B cell (primary cell): ENCODE measurements at regions of chr1 and their contacts with region 1.

Region 1: DNA sequence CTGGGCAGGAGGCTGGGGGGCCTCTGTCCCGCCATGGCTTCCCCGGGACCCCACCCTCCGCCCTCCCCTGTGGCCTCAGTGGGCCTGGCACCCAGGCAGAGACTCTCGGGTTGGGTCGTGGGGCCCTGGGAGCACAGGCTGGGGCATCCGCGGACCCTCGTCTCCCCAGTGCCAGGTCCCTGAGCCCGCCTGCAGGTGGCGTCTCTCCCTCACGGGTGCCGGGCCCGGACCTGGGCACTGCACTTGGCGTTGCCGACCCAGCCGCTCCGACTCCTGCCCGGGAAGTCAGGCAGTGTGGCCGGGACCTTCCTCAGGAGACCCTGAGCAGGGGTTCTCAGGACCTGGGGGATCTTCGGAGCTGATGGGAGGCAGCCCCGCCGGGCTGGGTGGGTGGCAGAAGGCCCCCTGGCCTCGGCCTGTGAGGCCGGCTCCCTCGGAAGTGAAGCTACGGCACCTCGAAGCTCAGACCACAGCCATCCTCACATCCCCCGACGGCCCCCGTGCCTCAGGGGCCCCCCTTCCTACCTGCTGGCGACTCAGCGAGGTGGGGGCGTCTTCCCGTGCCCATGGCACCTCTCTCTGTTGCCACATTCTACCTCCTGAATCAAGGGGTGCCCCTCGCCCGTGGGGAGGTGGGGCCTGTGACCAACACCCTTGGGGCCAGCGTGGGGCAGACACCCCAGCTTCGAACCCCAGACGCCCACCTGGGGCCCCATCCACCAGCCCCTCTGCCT is 6.4 kb upstream of the C1orf159 start:
- DNase-seq: peak; percentile 90
- ATAC-seq: peak; percentile 97
- H3K4me3 ChIP-seq: peak overlapping the region in 4 of 5 experiments; percentile 28 to 52 (median 44)
- H3K4me3 Mint-ChIP-seq: peak overlapping the region; percentile 47
- H3K27ac ChIP-seq: peak overlapping the region; percentile 29 to 37
- H3K27ac Mint-ChIP-seq: no peak overlapping the region
- H3K4me1 ChIP-seq: peaks cover 29 to 31% of the 10 kb centered on the region in 2 donors
- H3K4me1 Mint-ChIP-seq: peaks cover 19% of the 10 kb centered on the region
- H3K27me3 ChIP-seq: peaks cover 0 to 30% (median 3%) of the 10 kb centered on the region in 4 experiments
- H3K27me3 Mint-ChIP-seq: peaks cover 9% of the 10 kb centered on the region
- CTCF ChIP-seq: peak; percentile 96

Region 2: DNA sequence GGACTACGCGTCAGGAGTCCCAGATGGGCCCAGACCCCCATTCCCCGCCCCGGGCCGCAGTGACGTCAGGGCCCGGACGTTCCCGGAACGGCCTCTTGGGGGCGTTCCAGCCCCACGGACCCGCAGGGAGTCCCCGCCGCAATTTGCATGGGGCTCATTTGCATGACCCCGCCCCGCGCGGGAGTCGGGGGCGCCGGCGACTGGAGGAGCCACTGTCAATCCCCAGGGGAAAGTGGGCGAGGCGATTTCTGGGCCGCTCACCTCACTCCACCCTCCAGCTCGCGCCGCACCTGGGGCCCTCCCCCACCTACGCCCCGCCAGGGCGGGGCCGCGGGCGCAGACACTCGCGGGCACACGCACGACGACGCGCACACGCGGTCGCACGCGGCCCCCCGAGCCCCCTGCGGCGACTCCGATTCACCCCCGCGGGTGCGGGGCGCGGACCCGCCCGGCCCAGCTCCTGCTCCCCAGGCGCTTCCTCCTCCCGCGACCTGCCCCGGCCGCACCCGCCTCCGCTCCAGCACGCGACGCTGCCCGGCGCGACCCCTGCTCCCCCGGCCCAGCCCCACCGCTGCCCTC is 89.1 kb before region 1 on chr1:
- CTCF ChIA-PET with region 1: interaction called, 14 read pairs
- POLR2A ChIA-PET with region 1: no interaction called
- intact Hi-C with region 1: loop called (anchors 2 kb)
- DNase-seq: peak; percentile 98
- ATAC-seq: peak; percentile 93
- H3K4me3 ChIP-seq: peak overlapping the region in 4 of 5 experiments; percentile 20 to 50 (median 38)
- H3K4me3 Mint-ChIP-seq: peak overlapping the region; percentile 78
- H3K27ac ChIP-seq: no peak overlapping the region
- H3K27ac Mint-ChIP-seq: peak overlapping the region; percentile 56
- H3K4me1 ChIP-seq: peaks cover 29 to 30% of the 10 kb centered on the region in 2 donors
- H3K4me1 Mint-ChIP-seq: peaks cover 24% of the 10 kb centered on the region
- H3K27me3 ChIP-seq: peaks cover 0 to 32% (median 5%) of the 10 kb centered on the region in 4 experiments
- H3K27me3 Mint-ChIP-seq: peaks cover 11% of the 10 kb centered on the region
- CTCF ChIP-seq: peak; percentile 89

Region 3: DNA sequence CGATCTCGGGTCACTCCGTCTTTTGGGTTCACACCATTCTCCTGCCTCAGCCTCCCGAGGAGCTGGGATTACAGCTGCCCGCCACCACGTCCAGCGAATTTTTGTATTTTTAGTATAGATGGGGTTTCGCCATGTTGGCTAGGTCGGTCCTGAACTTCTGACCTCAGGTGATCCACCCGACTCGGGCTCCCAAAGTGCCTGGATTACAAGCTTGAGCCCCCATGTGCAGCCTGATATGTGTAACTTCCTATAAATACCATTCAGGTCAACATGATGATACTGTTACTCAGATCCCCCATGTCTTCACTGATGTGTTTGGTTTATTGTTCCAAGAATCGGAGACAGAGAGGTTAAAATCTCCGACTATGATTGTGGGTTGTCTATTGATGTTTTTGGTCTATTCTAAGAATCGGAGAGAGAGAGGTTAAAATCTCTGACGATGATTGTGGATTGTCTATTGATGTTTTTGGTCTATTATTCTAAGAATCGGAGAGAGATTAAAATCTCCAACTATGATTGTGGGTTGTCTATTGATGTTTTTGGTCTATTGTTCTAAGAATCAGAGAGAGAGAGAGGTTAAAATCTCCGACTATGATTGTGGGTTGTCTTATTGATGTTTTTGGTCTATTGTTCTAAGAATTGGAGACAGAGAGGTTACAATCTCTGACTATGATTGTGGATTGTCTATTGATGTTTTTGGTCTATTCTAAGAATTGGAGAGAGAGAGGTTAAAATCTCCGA is 23.4 kb before region 1 on chr1:
- CTCF ChIA-PET with region 1: no interaction called
- POLR2A ChIA-PET with region 1: no interaction called
- intact Hi-C with region 1: no loop called
- DNase-seq: no peak
- ATAC-seq: no peak
- H3K4me3 ChIP-seq: no peak overlapping the region
- H3K4me3 Mint-ChIP-seq: no peak overlapping the region
- H3K27ac ChIP-seq: no peak overlapping the region
- H3K27ac Mint-ChIP-seq: no peak overlapping the region
- H3K4me1 ChIP-seq: no peaks in the 10 kb centered on the region
- H3K4me1 Mint-ChIP-seq: no peaks in the 10 kb centered on the region
- H3K27me3 ChIP-seq: no peaks in the 10 kb centered on the region
- H3K27me3 Mint-ChIP-seq: no peaks in the 10 kb centered on the region
- CTCF ChIP-seq: no peak

Region 4: GRCh38 chr1:1157426-1157913 is 35.2 kb after region 1 on chr1:
- CTCF ChIA-PET with region 1: interaction called, 14 read pairs
- POLR2A ChIA-PET with region 1: interaction called, 7 read pairs
- intact Hi-C with region 1: no loop called
- DNase-seq: peak; percentile 74
- ATAC-seq: peak; percentile 64
- H3K4me3 ChIP-seq: peak overlapping the region; percentile 52 to 93 (median 87)
- H3K4me3 Mint-ChIP-seq: peak overlapping the region; percentile 86
- H3K27ac ChIP-seq: peak overlapping the region; percentile 94 to 97
- H3K27ac Mint-ChIP-seq: peak overlapping the region; percentile 89
- H3K4me1 ChIP-seq: peaks cover 8 to 23% of the 10 kb centered on the region in 2 donors
- H3K4me1 Mint-ChIP-seq: peaks cover 5% of the 10 kb centered on the region
- H3K27me3 ChIP-seq: no peaks in the 10 kb centered on the region
- H3K27me3 Mint-ChIP-seq: no peaks in the 10 kb centered on the region
- CTCF ChIP-seq: no peak

Region 5: DNA sequence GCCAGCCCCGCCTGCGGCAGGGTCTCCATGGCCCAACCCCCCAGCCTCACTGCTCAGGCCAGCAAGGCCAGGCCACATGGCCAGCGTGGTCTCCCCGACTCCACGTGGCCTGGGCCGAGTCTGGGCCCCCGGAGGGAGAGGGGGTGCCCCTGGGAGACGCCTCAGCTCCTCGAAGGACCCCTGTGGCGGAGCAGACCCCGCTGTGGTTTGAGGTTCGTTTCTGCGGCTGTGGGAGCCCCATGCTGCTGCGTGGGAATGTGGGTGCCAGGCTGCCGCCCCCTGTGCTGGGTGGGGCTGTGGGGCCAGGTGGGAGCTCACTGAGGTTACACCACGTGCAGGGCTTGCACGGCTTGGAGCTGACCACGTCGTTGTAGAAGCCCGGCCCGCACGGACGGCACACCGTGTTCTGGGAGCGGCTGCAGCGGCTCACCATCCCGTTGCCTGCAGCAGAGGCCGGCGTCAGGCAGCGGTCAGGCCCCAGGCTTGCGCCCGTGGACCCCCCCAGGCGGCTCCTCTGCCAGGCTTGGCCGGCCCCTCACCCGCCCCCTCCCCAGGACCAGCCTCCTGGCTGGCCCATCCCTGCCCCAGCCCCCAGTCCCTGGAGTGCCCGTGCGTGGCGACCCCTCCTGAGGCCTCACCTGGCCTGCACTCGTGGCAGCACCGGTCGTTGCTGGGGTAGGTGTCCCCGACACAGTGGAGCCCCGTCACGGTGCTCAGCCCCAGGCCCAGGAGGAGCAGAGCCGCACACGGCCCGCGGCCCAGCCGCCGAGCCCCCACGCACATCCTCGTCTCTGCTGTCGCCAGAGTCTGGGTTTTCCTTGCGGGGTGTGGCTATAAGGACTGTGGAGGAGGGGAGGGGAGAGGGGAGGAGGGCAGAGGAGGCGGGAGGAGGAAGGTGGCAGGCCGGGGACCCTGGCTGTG is 91.4 kb after region 1 on chr1 and contains the start of gene TNFRSF4:
- CTCF ChIA-PET with region 1: interaction called, 39 read pairs
- POLR2A ChIA-PET with region 1: interaction called, 3 read pairs
- intact Hi-C with region 1: loop called (anchors 1 kb)
- DNase-seq: peak; percentile 50
- ATAC-seq: peak; percentile 2
- H3K4me3 ChIP-seq: peak within 1 kb of the TSS in 3 of 5 experiments; percentile 5 to 41 (median 8)
- H3K4me3 Mint-ChIP-seq: peak within 1 kb of the TSS; percentile 66
- H3K27ac ChIP-seq: peak within 1 kb of the TSS in 1 of 2 donors; percentile 10
- H3K27ac Mint-ChIP-seq: peak within 1 kb of the TSS; percentile 50
- H3K4me1 ChIP-seq: peaks cover 45 to 55% of the 10 kb centered on the region in 2 donors
- H3K4me1 Mint-ChIP-seq: peaks cover 31% of the 10 kb centered on the region
- H3K27me3 ChIP-seq: peaks cover 0 to 24% (median 8%) of the 10 kb centered on the region in 4 experiments
- H3K27me3 Mint-ChIP-seq: peaks cover 3% of the 10 kb centered on the region
- CTCF ChIP-seq: no peak
- total RNA-seq, gene TNFRSF4: 1.8 and 2.3 TPM in 2 replicates

Region 6: GRCh38 chr1:1250786-1251284 is 128.6 kb after region 1 on chr1:
- CTCF ChIA-PET with region 1: interaction called, 151 read pairs
- POLR2A ChIA-PET with region 1: interaction called, 17 read pairs
- intact Hi-C with region 1: loop called (anchors 1 kb)
- DNase-seq: peak; percentile 85
- ATAC-seq: peak; percentile 71
- H3K4me3 ChIP-seq: no peak overlapping the region
- H3K4me3 Mint-ChIP-seq: peak overlapping the region; percentile 63
- H3K27ac ChIP-seq: peak overlapping the region; percentile 11 to 84
- H3K27ac Mint-ChIP-seq: peak overlapping the region; percentile 88
- H3K4me1 ChIP-seq: peaks cover 27 to 30% of the 10 kb centered on the region in 2 donors
- H3K4me1 Mint-ChIP-seq: peaks cover 16% of the 10 kb centered on the region
- H3K27me3 ChIP-seq: peaks cover 0 to 16% (median 8%) of the 10 kb centered on the region in 4 experiments
- H3K27me3 Mint-ChIP-seq: no peaks in the 10 kb centered on the region
- CTCF ChIP-seq: no peak